Calu3 (cell line): ENCODE measurements at regions of chr17 and their contacts with region 1.

Region 1: GRCh38 chr17:39813631-39814030 is 50.5 kb downstream of the IKZF3 start:
- DNase-seq: peak; percentile 64
- H3K4me3 Mint-ChIP-seq: no peak overlapping the region
- H3K27ac Mint-ChIP-seq: no peak overlapping the region
- H3K4me1 Mint-ChIP-seq: peaks cover 19% of the 10 kb centered on the region
- H3K27me3 Mint-ChIP-seq: no peaks in the 10 kb centered on the region
- CTCF ChIP-seq: no peak

Region 2: DNA sequence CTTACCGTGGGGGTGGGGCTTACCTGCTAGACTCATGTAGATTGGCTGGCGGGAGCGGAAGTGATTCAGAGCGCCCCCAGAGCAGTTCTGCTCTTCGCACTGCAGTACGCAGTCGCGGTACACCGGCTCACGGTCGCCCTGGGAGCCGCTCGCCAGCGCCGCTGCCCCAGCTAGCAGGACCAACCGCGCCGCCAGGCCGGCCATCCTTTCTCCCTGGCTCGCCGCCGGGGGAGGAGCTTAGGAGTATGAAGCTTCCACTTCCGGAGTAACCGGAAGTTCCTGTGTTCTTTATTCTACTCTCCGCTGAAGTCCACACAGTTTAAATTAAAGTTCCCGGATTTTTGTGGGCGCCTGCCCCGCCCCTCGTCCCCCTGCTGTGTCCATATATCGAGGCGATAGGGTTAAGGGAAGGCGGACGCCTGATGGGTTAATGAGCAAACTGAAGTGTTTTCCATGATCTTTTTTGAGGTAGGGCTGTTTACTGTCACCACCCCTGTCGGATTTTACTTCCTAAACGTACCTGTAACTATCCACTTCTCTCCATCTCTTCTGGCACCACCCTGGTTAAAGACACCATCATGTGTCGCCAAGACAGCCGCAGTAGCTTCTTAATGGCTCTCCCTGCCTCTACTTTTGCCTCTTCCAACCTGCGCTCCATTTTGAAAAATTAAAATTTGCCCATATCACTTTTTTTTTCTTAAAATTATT is 125.7 kb before region 1 on chr17 and contains the start of gene PGAP3:
- CTCF ChIA-PET with region 1: interaction called, 59 read pairs
- intact Hi-C with region 1: no loop called
- DNase-seq: peak; percentile 100
- H3K4me3 Mint-ChIP-seq: peak within 1 kb of the TSS; percentile 64
- H3K27ac Mint-ChIP-seq: peak within 1 kb of the TSS; percentile 63
- H3K4me1 Mint-ChIP-seq: peaks cover 27% of the 10 kb centered on the region
- H3K27me3 Mint-ChIP-seq: no peaks in the 10 kb centered on the region
- CTCF ChIP-seq: no peak
- total RNA-seq, gene PGAP3: 1,186 and 1,276 TPM in 2 replicates

Region 3: GRCh38 chr17:39738931-39739884 is 74.4 kb before region 1 on chr17:
- CTCF ChIA-PET with region 1: interaction called, 1,211 read pairs
- intact Hi-C with region 1: loop called (anchors 1 kb)
- DNase-seq: peak; percentile 100
- H3K4me3 Mint-ChIP-seq: peak overlapping the region; percentile 77
- H3K27ac Mint-ChIP-seq: peak overlapping the region; percentile 21
- H3K4me1 Mint-ChIP-seq: peaks cover 54% of the 10 kb centered on the region
- H3K27me3 Mint-ChIP-seq: no peaks in the 10 kb centered on the region
- CTCF ChIP-seq: no peak

Region 4: GRCh38 chr17:39794249-39794970 is 19.2 kb before region 1 on chr17:
- CTCF ChIA-PET with region 1: interaction called, 1,210 read pairs
- intact Hi-C with region 1: no loop called
- DNase-seq: peak; percentile 73
- H3K4me3 Mint-ChIP-seq: no peak overlapping the region
- H3K27ac Mint-ChIP-seq: no peak overlapping the region
- H3K4me1 Mint-ChIP-seq: no peaks in the 10 kb centered on the region
- H3K27me3 Mint-ChIP-seq: no peaks in the 10 kb centered on the region
- CTCF ChIP-seq: no peak

Region 5: GRCh38 chr17:39889200-39889599 is 75.6 kb after region 1 on chr17:
- CTCF ChIA-PET with region 1: interaction called, 1,004 read pairs
- intact Hi-C with region 1: loop called (anchors 1 kb)
- DNase-seq: peak; percentile 82
- H3K4me3 Mint-ChIP-seq: no peak overlapping the region
- H3K27ac Mint-ChIP-seq: no peak overlapping the region
- H3K4me1 Mint-ChIP-seq: peaks cover 26% of the 10 kb centered on the region
- H3K27me3 Mint-ChIP-seq: peaks cover 22% of the 10 kb centered on the region
- CTCF ChIP-seq: no peak

Region 6: DNA sequence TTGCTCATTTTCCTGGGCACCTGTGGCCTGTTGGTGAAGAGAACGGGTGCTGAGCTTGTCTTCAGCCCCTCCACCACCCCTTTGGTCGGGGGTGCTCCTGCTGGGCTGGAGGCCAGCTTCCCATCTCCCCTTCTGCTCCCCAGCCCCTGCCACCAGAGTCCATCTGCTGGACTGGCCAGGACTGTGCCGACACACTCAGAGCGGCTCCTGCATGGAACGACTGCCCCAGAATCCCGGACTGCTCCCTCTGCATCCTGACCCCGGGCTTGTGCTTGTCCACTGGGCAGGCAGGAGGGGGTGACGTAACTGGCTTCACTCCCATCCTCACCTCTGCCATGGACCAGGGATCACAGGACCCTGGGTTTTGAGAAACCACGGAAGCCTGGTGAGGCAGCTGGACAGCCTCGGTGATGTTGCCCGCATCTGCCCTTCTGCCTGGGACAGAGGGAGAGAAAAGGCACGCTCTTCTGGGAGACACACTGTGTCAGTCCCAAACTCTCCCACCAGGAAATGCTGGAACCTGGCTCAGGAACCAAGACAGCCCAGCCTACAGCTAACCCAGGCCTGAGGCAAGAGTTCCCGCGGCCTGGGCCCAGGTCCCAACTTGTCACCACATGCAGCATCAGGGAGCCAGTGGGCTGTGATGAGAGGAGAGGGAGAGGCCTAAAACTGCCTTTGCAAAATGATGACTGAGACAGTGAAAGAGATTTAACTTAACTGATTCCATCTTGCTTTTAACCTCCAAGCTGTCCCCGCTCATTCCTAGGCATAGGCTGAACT is 133.1 kb after region 1 on chr17:
- CTCF ChIA-PET with region 1: interaction called, 1,809 read pairs
- intact Hi-C with region 1: no loop called
- DNase-seq: peak; percentile 86
- H3K4me3 Mint-ChIP-seq: no peak overlapping the region
- H3K27ac Mint-ChIP-seq: no peak overlapping the region
- H3K4me1 Mint-ChIP-seq: peaks cover 39% of the 10 kb centered on the region
- H3K27me3 Mint-ChIP-seq: peaks cover 57% of the 10 kb centered on the region
- CTCF ChIP-seq: no peak